Naive thymus-derived CD8-positive, alpha-beta T cell (primary cell): ENCODE measurements at regions of chr2 and their contacts with region 1.

Region 1: GRCh38 chr2:97663965-97664635 is at the start of gene ACTR1B:
- DNase-seq: peak; percentile 95 to 99 (median 98)
- ATAC-seq: peak; percentile 86
- H3K4me3 Mint-ChIP-seq: peak within 1 kb of the TSS; percentile 91 to 98 (median 96)
- H3K27ac Mint-ChIP-seq: peak within 1 kb of the TSS; percentile 93 to 100 (median 98)
- H3K4me1 Mint-ChIP-seq: peaks cover 22 to 42% (median 32%) of the 10 kb centered on the region in 4 donors
- H3K27me3 Mint-ChIP-seq: no peaks in the 10 kb centered on the region
- polyA plus RNA-seq, gene ACTR1B: 11.7 to 17.9 (median 13.0) TPM

Region 2: DNA sequence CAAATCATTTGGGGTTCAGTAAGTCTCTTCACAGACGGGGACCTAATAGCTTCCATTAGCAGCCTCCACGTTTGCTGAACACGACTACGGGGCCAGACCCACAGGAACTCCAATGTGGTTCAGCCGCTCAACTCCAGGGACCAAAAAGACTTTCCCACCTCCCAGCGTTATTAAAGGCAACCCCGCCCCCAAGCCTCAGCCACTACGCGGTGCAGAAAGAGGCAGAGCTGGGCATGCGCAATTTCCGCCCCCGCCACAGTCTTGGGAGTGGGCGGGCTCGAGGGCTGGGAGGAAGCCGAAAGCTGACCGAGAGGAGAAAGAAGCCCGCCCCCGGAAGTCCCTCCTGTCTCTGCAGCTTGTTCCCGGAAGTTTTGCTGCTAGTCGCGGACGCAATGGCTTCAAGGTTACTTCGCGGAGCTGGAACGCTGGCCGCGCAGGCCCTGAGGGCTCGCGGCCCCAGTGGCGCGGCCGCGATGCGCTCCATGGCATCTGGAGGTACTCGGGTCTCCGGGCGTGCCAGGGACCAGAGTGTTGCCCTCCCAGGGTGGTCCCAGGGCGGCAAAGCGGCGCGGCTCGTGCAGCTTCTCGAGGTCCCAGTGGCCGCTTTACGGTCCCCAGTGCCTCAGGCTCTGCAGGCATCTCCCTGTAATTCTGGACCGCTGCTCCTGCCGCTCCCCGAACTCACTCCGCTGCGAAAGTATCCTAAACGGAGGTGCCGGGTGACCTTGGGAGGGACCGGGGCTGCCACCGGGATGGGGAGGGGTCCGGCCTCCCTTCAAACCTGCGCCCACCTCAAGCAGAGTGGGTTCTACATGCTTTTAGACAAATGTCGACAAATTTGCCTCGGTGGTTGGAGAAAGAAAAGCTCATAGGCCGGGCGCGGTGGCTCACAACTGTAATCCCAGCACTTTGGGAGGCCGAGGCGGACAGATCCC is 18.1 kb before region 1 on chr2 and contains the start of gene COX5B:
- POLR2A ChIA-PET with region 1: interaction called, 170 read pairs
- DNase-seq: peak; percentile 93 to 99 (median 98)
- ATAC-seq: peak; percentile 92 to 95
- H3K4me3 Mint-ChIP-seq: peak within 1 kb of the TSS; percentile 93 to 99 (median 98)
- H3K27ac Mint-ChIP-seq: peak within 1 kb of the TSS; percentile 92 to 99 (median 98)
- H3K4me1 Mint-ChIP-seq: peaks cover 17 to 27% (median 23%) of the 10 kb centered on the region in 4 donors
- H3K27me3 Mint-ChIP-seq: no peaks in the 10 kb centered on the region
- polyA plus RNA-seq, gene COX5B: 321 to 373 (median 350) TPM

Region 3: DNA sequence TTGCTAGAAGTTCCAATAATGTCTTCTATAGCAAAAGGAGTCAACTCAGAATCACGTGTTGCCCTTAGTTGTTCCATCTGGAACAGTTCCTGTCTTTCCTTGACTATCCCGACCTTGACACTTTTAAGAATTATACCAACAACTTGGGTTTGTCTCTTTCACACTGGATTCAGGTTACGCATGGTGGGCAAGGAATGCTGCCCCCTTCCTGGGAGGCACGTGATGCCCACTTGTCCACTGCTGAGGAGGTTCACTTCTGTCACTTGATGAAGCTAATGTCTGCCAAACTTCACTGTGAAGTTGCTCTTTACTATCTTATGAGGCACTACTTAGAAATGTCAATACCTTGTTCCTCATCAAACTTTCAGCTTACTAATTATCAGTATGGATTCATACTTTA is 13.0 kb before region 1 on chr2:
- POLR2A ChIA-PET with region 1: interaction called, 170 read pairs
- DNase-seq: no peak
- ATAC-seq: no peak
- H3K4me3 Mint-ChIP-seq: no peak overlapping the region
- H3K27ac Mint-ChIP-seq: peak overlapping the region in 7 of 10 donors; percentile 23 to 91 (median 73)
- H3K4me1 Mint-ChIP-seq: peaks cover 11 to 21% (median 16%) of the 10 kb centered on the region in 4 donors
- H3K27me3 Mint-ChIP-seq: no peaks in the 10 kb centered on the region

Region 4: GRCh38 chr2:97834610-97835009 is 170.5 kb after region 1 on chr2:
- POLR2A ChIA-PET with region 1: no interaction called
- DNase-seq: no peak
- ATAC-seq: no peak
- H3K4me3 Mint-ChIP-seq: no peak overlapping the region
- H3K27ac Mint-ChIP-seq: peak overlapping the region in 1 of 10 donors; percentile 16
- H3K4me1 Mint-ChIP-seq: peaks cover 0 to 10% (median 2%) of the 10 kb centered on the region in 4 donors
- H3K27me3 Mint-ChIP-seq: no peaks in the 10 kb centered on the region